H1 (cell line): ENCODE measurements at regions of chr1 and their contacts with region 1.

Region 1: GRCh38 chr1:160169553-160170399 is 18.4 kb downstream of the ATP1A4 start:
- DNase-seq: peak; percentile 79 to 86
- H3K4me3 ChIP-seq: peak overlapping the region in 3 of 4 experiments; percentile 7 to 50 (median 13); a peak in 5 of 8 replicates
- H3K27ac ChIP-seq: peak overlapping the region; percentile 46; the same call in 1 of the 2 replicates
- H3K4me1 ChIP-seq: peaks cover 12 to 28% (median 22%) of the 10 kb centered on the region in 4 experiments; a peak in 6 of 7 replicates
- H3K27me3 ChIP-seq: peaks cover 0 to 2% (median under 1%) of the 10 kb centered on the region in 4 experiments; a peak in 2 of 7 replicates
- CTCF ChIP-seq: no peak
- EP300 ChIP-seq: peak in 1 of 2 experiments; percentile 96; a peak in 2 of 3 replicates
- POLR2A ChIP-seq: no peak
- RAD21 ChIP-seq: no peak

Region 2: GRCh38 chr1:160186246-160186645 is 16.5 kb after region 1 on chr1:
- CTCF ChIA-PET with region 1: interaction called, 148 read pairs
- POLR2A ChIA-PET with region 1: interaction called, 26 read pairs
- DNase-seq: no peak
- H3K4me3 ChIP-seq: no peak overlapping the region
- H3K27ac ChIP-seq: no peak overlapping the region
- H3K4me1 ChIP-seq: peaks cover 0 to 6% (median 3%) of the 10 kb centered on the region in 4 experiments; a peak in 4 of 7 replicates
- H3K27me3 ChIP-seq: no peaks in the 10 kb centered on the region
- CTCF ChIP-seq: no peak
- EP300 ChIP-seq: no peak
- POLR2A ChIP-seq: no peak
- RAD21 ChIP-seq: no peak

Region 3: GRCh38 chr1:160205242-160206035 is 35.7 kb after region 1 on chr1 and contains the start of gene PEA15:
- CTCF ChIA-PET with region 1: interaction called, 257 read pairs
- POLR2A ChIA-PET with region 1: interaction called, 107 read pairs
- DNase-seq: peak in 1 of 2 experiments; percentile 82
- H3K4me3 ChIP-seq: peak within 1 kb of the TSS; percentile 70 to 99 (median 86)
- H3K27ac ChIP-seq: peak within 1 kb of the TSS; percentile 75; the same call in 1 of the 2 replicates
- H3K4me1 ChIP-seq: peaks cover 13 to 35% (median 20%) of the 10 kb centered on the region in 4 experiments
- H3K27me3 ChIP-seq: no peaks in the 10 kb centered on the region
- CTCF ChIP-seq: no peak
- EP300 ChIP-seq: no peak
- POLR2A ChIP-seq: peak in 1 of 2 experiments; percentile 48; a peak in 2 of 3 replicates
- RAD21 ChIP-seq: no peak
- total RNA-seq, gene PEA15: 75.1 and 78.8 TPM in 2 replicates

Region 4: DNA sequence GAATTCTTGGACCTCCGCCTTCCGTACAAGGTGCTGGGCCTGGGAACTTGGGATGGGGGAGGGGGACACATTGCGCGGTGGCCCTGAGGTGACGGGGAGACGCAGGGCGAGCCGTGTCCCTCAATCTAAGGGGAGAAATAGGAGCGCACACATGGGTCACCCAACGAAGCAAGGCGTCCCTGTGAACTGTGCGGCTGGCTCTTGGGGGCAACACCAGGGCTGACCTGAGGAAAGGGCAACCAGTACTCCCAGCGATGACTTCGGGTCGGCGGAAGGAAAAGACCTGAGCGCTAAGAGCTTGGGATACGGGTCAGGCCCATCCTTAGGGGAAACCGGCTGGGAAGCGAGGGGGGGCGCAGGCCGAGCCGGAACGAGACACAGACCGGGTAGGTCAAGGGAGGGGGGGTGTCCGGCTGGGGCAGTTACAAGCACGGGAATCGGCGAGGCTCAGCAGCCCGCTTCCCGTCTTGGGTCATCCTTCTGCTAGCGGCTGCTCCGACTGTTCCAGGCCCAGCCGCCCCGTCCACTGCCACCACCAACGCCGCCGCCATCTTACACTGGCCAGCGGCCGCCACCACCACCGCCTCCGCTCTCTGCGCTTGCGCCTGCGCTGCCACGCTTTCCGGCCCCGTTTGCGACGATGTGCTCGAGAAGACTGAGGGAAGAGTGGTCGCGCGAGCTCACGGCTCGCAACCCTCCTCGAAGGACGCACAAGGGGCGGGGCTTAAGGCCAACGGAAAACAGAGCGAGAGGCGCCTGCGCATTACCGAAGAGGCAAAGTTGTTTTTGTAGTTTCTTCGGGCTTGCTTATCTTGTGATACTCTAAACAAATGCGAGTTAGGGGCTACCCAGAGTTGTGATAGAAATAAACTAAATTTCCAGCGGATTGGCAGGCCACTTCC is 92.4 kb after region 1 on chr1 and contains the start of gene DCAF8:
- CTCF ChIA-PET with region 1: interaction called, 5 read pairs
- POLR2A ChIA-PET with region 1: interaction called, 20 read pairs
- DNase-seq: peak; percentile 92 to 98
- H3K4me3 ChIP-seq: peak within 1 kb of the TSS; percentile 91 to 99 (median 96)
- H3K27ac ChIP-seq: peak within 1 kb of the TSS; percentile 97
- H3K4me1 ChIP-seq: peaks cover 2 to 13% (median 5%) of the 10 kb centered on the region in 4 experiments; a peak in 6 of 7 replicates
- H3K27me3 ChIP-seq: no peaks in the 10 kb centered on the region
- CTCF ChIP-seq: no peak
- EP300 ChIP-seq: no peak
- POLR2A ChIP-seq: peak; percentile 98 to 99
- RAD21 ChIP-seq: no peak
- total RNA-seq, gene DCAF8: 110 and 113 TPM in 2 replicates